CD8-positive, alpha-beta T cell (primary cell): ENCODE measurements at regions of chr2 and their contacts with region 1.

Region 1: GRCh38 chr2:38750891-38751595 is at the start of gene SRSF7:
- DNase-seq: peak; percentile 96 to 100 (median 98)
- ATAC-seq: peak; percentile 73
- H3K4me3 ChIP-seq: peak within 1 kb of the TSS; percentile 92 to 99
- H3K4me3 Mint-ChIP-seq: peak within 1 kb of the TSS; percentile 96
- H3K27ac ChIP-seq: peak within 1 kb of the TSS; percentile 96 to 99
- H3K27ac Mint-ChIP-seq: peak within 1 kb of the TSS; percentile 98
- H3K4me1 ChIP-seq: peaks cover 55% of the 10 kb centered on the region
- H3K4me1 Mint-ChIP-seq: peaks cover 53% of the 10 kb centered on the region
- H3K27me3 ChIP-seq: no peaks in the 10 kb centered on the region
- H3K27me3 Mint-ChIP-seq: no peaks in the 10 kb centered on the region
- CTCF ChIP-seq: no peak
- total RNA-seq, gene SRSF7: 607 to 608 TPM

Region 2: GRCh38 chr2:37083873-37084794 is 1666.9 kb before region 1 on chr2 and contains the starts of genes GPATCH11 and HEATR5B:
- CTCF ChIA-PET with region 1: no interaction called
- POLR2A ChIA-PET with region 1: no interaction called
- intact Hi-C with region 1: loop called in 1 of 2 experiments (anchors 5 kb)
- DNase-seq: peak; percentile 73 to 97 (median 92)
- ATAC-seq: peak; percentile 84
- H3K4me3 ChIP-seq: peak within 1 kb of the TSS; percentile 76 to 99
- H3K4me3 Mint-ChIP-seq: no peak within 1 kb of the TSS
- H3K27ac ChIP-seq: peak within 1 kb of the TSS; percentile 67 to 85
- H3K27ac Mint-ChIP-seq: peak within 1 kb of the TSS; percentile 14
- H3K4me1 ChIP-seq: peaks cover 51% of the 10 kb centered on the region
- H3K4me1 Mint-ChIP-seq: peaks cover 50% of the 10 kb centered on the region
- H3K27me3 ChIP-seq: no peaks in the 10 kb centered on the region
- H3K27me3 Mint-ChIP-seq: no peaks in the 10 kb centered on the region
- CTCF ChIP-seq: no peak
- total RNA-seq, gene GPATCH11: 5.4 to 6.4 TPM
- total RNA-seq, gene HEATR5B: 9.9 to 11.0 TPM

Region 3: DNA sequence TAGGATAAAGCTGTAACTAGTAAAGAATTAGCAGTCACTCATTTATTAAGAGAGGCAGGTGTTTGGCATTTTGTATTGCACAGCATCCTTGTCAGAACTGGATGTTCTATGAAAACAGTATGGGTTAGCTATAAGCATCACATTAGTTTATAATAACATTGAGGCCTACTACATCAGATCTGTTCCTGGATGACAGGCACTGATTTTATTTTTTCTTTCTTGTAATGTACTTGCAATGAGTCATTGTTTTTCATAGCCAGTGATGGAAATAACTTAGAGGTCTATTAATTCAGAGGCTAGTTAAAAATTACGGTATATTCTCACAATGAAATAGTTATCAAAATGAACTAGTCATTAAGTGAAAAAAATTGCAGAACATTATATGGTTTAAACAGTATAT is 839.0 kb before region 1 on chr2:
- CTCF ChIA-PET with region 1: no interaction called
- POLR2A ChIA-PET with region 1: no interaction called
- intact Hi-C with region 1: no loop called
- DNase-seq: no peak
- ATAC-seq: no peak
- H3K4me3 ChIP-seq: no peak overlapping the region
- H3K4me3 Mint-ChIP-seq: no peak overlapping the region
- H3K27ac ChIP-seq: no peak overlapping the region
- H3K27ac Mint-ChIP-seq: no peak overlapping the region
- H3K4me1 ChIP-seq: no peaks in the 10 kb centered on the region
- H3K4me1 Mint-ChIP-seq: no peaks in the 10 kb centered on the region
- H3K27me3 ChIP-seq: no peaks in the 10 kb centered on the region
- H3K27me3 Mint-ChIP-seq: peaks cover 12% of the 10 kb centered on the region
- CTCF ChIP-seq: no peak

Region 4: DNA sequence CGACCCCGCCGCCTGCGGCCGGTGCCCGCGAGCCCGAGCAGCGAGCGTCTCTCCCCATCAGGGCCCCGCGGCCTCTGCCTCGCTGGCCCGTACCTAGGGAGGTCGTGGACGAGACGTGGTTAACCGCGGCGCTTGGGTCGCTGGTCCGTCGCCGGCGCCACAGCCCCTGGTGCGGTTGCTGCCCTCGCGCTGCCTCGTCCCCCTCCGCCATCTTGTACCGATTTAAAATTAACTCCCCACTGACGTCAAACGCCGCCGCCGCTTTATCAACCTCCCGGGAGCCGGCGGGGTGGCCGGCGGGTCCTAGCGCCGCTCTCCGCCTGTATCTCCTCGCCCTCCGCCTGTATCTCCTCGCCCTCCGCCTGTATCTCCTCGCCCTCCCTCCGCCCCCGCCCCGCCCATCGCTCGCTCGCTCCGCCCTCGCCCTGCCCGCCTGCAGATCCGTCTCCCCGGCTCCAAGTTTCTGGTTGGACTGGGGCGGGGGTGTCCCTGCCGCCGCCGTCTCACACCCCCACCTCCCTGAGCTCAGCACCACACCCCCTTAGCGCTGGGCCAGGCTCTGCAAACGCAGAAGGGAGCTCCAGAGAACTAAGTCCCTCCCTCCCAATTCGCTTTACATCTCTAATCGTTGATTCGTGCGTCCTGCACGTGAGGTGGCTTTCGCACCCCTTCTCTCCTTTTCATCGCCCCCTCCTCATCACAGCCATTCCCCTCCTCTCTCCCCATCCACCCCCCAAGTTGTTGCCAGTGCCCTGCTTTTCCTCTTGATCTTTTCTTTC is 373.8 kb before region 1 on chr2 and contains the start of gene ATL2:
- CTCF ChIA-PET with region 1: no interaction called
- POLR2A ChIA-PET with region 1: interaction called, 6 read pairs
- intact Hi-C with region 1: loop called (anchors 1 to 2 kb)
- DNase-seq: peak; percentile 87 to 96 (median 93)
- ATAC-seq: peak; percentile 80
- H3K4me3 ChIP-seq: peak within 1 kb of the TSS; percentile 71 to 93
- H3K4me3 Mint-ChIP-seq: peak within 1 kb of the TSS; percentile 97
- H3K27ac ChIP-seq: peak within 1 kb of the TSS; percentile 84 to 91
- H3K27ac Mint-ChIP-seq: peak within 1 kb of the TSS; percentile 96
- H3K4me1 ChIP-seq: peaks cover 35% of the 10 kb centered on the region
- H3K4me1 Mint-ChIP-seq: peaks cover 69% of the 10 kb centered on the region
- H3K27me3 ChIP-seq: no peaks in the 10 kb centered on the region
- H3K27me3 Mint-ChIP-seq: no peaks in the 10 kb centered on the region
- CTCF ChIP-seq: no peak
- total RNA-seq, gene ATL2: 76.4 to 88.2 TPM

Region 5: DNA sequence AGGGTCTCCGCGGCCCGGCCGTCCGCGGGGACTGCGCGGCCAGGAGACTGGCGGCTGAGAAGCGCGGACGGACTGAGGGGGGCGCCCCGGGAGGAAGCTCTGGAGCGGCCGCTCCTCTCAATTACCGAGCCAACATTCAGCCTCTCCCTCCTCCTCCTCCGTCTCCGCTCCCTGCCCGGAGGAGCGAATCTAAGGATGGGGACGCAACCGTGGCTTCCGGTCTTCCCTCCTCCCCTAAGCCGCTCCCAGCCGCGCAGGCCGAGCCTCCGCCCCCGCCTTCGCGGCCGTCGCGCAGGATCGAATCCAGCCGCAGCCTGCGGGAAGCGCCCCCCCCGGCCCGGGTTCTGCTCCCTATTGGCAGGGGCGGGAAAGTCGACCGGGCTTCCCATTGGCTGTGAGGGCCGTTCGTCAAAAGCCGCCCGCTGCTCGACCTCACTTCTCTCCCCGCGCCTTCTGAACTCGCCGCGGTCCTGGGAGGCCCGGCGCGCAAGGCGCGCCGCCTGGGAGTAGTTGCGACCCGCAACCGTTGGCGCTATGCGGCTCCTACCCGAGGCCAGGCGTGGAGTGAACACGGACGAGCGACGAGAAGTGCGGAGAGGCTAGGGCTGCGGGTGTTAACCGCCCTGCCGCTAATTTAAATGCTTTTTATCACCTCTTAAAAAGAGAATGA is 148.2 kb before region 1 on chr2 and contains the start of gene HNRNPLL:
- CTCF ChIA-PET with region 1: interaction called, 7 read pairs
- POLR2A ChIA-PET with region 1: interaction called, 78 read pairs
- intact Hi-C with region 1: loop called (anchors 1 kb)
- DNase-seq: peak; percentile 79 to 94 (median 91)
- ATAC-seq: peak; percentile 78
- H3K4me3 ChIP-seq: peak within 1 kb of the TSS; percentile 82 to 85
- H3K4me3 Mint-ChIP-seq: peak within 1 kb of the TSS; percentile 95
- H3K27ac ChIP-seq: peak within 1 kb of the TSS; percentile 54 to 64
- H3K27ac Mint-ChIP-seq: peak within 1 kb of the TSS; percentile 91
- H3K4me1 ChIP-seq: peaks cover 23% of the 10 kb centered on the region
- H3K4me1 Mint-ChIP-seq: peaks cover 47% of the 10 kb centered on the region
- H3K27me3 ChIP-seq: no peaks in the 10 kb centered on the region
- H3K27me3 Mint-ChIP-seq: no peaks in the 10 kb centered on the region
- CTCF ChIP-seq: no peak
- total RNA-seq, gene HNRNPLL: 35.0 to 37.6 TPM

Region 6: GRCh38 chr2:38734299-38735058 is 16.6 kb before region 1 on chr2:
- CTCF ChIA-PET with region 1: interaction called, 6 read pairs
- POLR2A ChIA-PET with region 1: interaction called, 46 read pairs
- intact Hi-C with region 1: no loop called
- DNase-seq: no peak
- ATAC-seq: no peak
- H3K4me3 ChIP-seq: no peak overlapping the region
- H3K4me3 Mint-ChIP-seq: no peak overlapping the region
- H3K27ac ChIP-seq: no peak overlapping the region
- H3K27ac Mint-ChIP-seq: no peak overlapping the region
- H3K4me1 ChIP-seq: no peaks in the 10 kb centered on the region
- H3K4me1 Mint-ChIP-seq: peaks cover 7% of the 10 kb centered on the region
- H3K27me3 ChIP-seq: no peaks in the 10 kb centered on the region
- H3K27me3 Mint-ChIP-seq: no peaks in the 10 kb centered on the region
- CTCF ChIP-seq: no peak

Region 7: GRCh38 chr2:38778687-38779082 is 27.6 kb after region 1 on chr2:
- CTCF ChIA-PET with region 1: no interaction called
- POLR2A ChIA-PET with region 1: interaction called, 22 read pairs
- intact Hi-C with region 1: loop called (anchors 1 kb)
- DNase-seq: no peak
- ATAC-seq: no peak
- H3K4me3 ChIP-seq: peak overlapping the region; percentile 64 to 68
- H3K4me3 Mint-ChIP-seq: peak overlapping the region; percentile 98
- H3K27ac ChIP-seq: peak overlapping the region; percentile 72 to 77
- H3K27ac Mint-ChIP-seq: peak overlapping the region; percentile 99
- H3K4me1 ChIP-seq: peaks cover 6% of the 10 kb centered on the region
- H3K4me1 Mint-ChIP-seq: peaks cover 17% of the 10 kb centered on the region
- H3K27me3 ChIP-seq: peaks cover 0 to 3% of the 10 kb centered on the region in 2 experiments
- H3K27me3 Mint-ChIP-seq: peaks cover 6% of the 10 kb centered on the region
- CTCF ChIP-seq: no peak

Region 8: GRCh38 chr2:39216346-39217191 is 465.5 kb after region 1 on chr2:
- CTCF ChIA-PET with region 1: no interaction called
- POLR2A ChIA-PET with region 1: no interaction called
- intact Hi-C with region 1: loop called in 1 of 2 experiments (anchors 5 kb)
- DNase-seq: peak; percentile 50 to 94 (median 74)
- ATAC-seq: peak; percentile 90
- H3K4me3 ChIP-seq: no peak overlapping the region
- H3K4me3 Mint-ChIP-seq: peak overlapping the region; percentile 44
- H3K27ac ChIP-seq: peak overlapping the region; percentile 41 to 64
- H3K27ac Mint-ChIP-seq: peak overlapping the region; percentile 37
- H3K4me1 ChIP-seq: peaks cover 43% of the 10 kb centered on the region
- H3K4me1 Mint-ChIP-seq: peaks cover 49% of the 10 kb centered on the region
- H3K27me3 ChIP-seq: no peaks in the 10 kb centered on the region
- H3K27me3 Mint-ChIP-seq: no peaks in the 10 kb centered on the region
- CTCF ChIP-seq: no peak